ENCODE measurements at regions of chr3 and their contacts with region 1.

Region 1: GRCh38 chr3:51703751-51704510 is 2.9 kb upstream of the GRM2 start:
- DNase-seq: no peak
- H3K4me3 Mint-ChIP-seq: no peak overlapping the region
- H3K27ac Mint-ChIP-seq: no peak overlapping the region
- H3K4me1 Mint-ChIP-seq: no peaks in the 10 kb centered on the region
- H3K27me3 Mint-ChIP-seq: no peaks in the 10 kb centered on the region
- CTCF ChIP-seq: no peak

Region 2: DNA sequence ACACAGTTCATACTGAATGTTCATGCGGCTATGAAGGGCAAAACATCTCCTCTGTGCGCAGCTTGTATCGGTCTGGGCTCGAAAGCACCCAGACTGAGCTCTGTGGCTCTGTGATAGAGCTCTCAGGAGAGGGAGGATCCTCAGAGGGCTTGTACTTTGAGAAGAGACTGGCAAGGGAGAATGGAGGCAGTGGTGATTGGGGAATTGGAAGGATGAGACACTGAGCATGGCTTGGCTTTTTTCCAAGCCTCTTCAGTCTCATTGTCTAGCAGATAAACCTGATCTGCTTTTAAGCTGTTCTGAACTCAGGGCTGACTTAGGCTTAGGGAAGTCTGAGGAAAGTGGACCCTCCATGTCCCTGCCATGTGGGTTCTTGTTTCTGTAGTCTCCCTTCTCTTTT is 122.4 kb before region 1 on chr3:
- CTCF ChIA-PET with region 1: no interaction called
- POLR2A ChIA-PET with region 1: no interaction called
- intact Hi-C with region 1: no loop called
- DNase-seq: peak; percentile 5
- H3K4me3 Mint-ChIP-seq: no peak overlapping the region
- H3K27ac Mint-ChIP-seq: no peak overlapping the region
- H3K4me1 Mint-ChIP-seq: no peaks in the 10 kb centered on the region
- H3K27me3 Mint-ChIP-seq: no peaks in the 10 kb centered on the region
- CTCF ChIP-seq: no peak

Region 3: DNA sequence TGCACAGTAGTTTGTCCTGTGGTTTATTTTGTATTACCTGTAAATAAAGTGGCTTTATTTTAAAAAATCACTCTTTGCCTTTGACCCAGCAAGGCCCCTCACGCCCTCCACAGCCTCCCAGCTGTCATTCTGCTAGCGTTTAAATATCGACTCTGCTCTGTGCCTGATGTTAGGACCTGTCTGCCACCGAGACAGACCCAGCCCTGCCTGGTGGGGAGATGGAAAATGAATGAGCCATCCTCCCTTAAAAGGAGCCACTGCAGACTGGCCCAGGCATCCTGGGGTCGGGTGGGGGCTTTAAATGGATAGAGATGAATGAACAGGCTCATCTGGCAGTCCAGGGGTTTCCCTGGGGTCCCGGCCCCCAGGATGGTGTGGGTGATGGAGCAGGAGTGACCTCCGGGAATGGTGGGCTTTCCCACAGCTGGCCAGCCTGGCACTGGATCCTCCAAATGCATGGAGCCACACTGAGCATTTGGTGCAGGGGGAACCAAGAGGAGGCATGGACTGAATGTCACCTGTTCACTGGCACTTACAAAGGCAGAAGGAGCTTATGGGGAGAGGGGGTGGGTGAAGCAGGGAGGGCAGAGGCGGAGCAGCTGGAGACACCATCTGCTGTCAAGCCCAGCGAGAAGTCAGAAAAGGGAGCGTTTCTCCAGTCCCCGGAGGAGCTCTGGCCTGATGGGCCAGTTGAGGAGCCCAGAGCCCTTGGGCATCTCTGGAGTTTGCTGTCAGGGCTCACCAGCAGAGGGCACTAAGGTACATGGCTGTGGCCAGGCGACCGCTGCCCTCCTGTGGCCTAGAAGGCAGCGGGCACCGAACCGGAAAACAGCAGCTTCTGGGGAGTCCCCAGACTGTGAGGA is 14.8 kb after region 1 on chr3:
- CTCF ChIA-PET with region 1: interaction called, 18 read pairs
- POLR2A ChIA-PET with region 1: no interaction called
- intact Hi-C with region 1: no loop called
- DNase-seq: peak; percentile 72
- H3K4me3 Mint-ChIP-seq: no peak overlapping the region
- H3K27ac Mint-ChIP-seq: no peak overlapping the region
- H3K4me1 Mint-ChIP-seq: no peaks in the 10 kb centered on the region
- H3K27me3 Mint-ChIP-seq: no peaks in the 10 kb centered on the region
- CTCF ChIP-seq: peak; percentile 82